ENCODE measurements at regions of chr9 and their contacts with region 1.

Region 1: GRCh38 chr9:128504485-128505413 is at the start of gene GLE1:
- DNase-seq: peak; percentile 98
- ATAC-seq: peak; percentile 99
- H3K4me3 Mint-ChIP-seq: peak within 1 kb of the TSS; percentile 95
- H3K27ac Mint-ChIP-seq: peak within 1 kb of the TSS; percentile 99
- H3K4me1 Mint-ChIP-seq: peaks cover 21% of the 10 kb centered on the region
- H3K27me3 Mint-ChIP-seq: no peaks in the 10 kb centered on the region
- total RNA-seq, gene GLE1: 52.5 to 54.4 TPM

Region 2: GRCh38 chr9:127943731-127944144 is 561.0 kb before region 1 on chr9:
- CTCF ChIA-PET with region 1: no interaction called
- POLR2A ChIA-PET with region 1: no interaction called
- intact Hi-C with region 1: no loop called
- DNase-seq: peak; percentile 91
- ATAC-seq: peak; percentile 87
- H3K4me3 Mint-ChIP-seq: no peak overlapping the region
- H3K27ac Mint-ChIP-seq: peak overlapping the region; percentile 81
- H3K4me1 Mint-ChIP-seq: peaks cover 23% of the 10 kb centered on the region
- H3K27me3 Mint-ChIP-seq: no peaks in the 10 kb centered on the region

Region 3: DNA sequence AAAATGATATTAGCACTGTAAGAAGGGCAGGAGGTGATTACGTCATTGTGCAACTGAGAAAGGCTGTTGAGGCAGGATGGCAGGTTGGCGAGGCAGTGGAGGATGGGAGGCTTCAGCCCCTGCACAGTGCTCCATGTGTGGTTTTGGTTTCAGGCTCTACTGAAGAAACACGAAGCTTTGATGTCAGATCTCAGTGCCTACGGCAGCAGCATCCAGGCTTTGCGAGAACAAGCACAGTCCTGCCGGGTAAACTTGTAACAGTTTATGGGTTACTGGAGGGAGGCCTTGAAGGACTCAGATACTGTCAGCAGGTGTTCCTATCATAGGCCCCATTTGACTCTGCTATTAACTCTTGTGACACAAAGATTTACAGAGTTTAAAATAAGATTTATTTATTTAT is 82.7 kb after region 1 on chr9:
- CTCF ChIA-PET with region 1: no interaction called
- POLR2A ChIA-PET with region 1: no interaction called
- intact Hi-C with region 1: loop called in 1 of 2 experiments (anchors 1 kb)
- DNase-seq: peak; percentile 82
- ATAC-seq: peak; percentile 99
- H3K4me3 Mint-ChIP-seq: no peak overlapping the region
- H3K27ac Mint-ChIP-seq: peak overlapping the region; percentile 85
- H3K4me1 Mint-ChIP-seq: peaks cover 15% of the 10 kb centered on the region
- H3K27me3 Mint-ChIP-seq: no peaks in the 10 kb centered on the region

Measured in activated CD4-positive, alpha-beta T cell treated with anti-CD3 and anti-CD28 coated beads for 36 hours (primary cell).